GM12878 (cell line): ENCODE measurements at regions of chr1 and their contacts with region 1.

Region 1: GRCh38 chr1:54488779-54489626 is 59.0 kb upstream of the ACOT11 start:
- DNase-seq: no peak
- ATAC-seq: peak; percentile 91
- H3K4me3 ChIP-seq: peak overlapping the region; percentile 94
- H3K27ac ChIP-seq: peak overlapping the region; percentile 55
- H3K4me1 ChIP-seq: peaks cover 7% of the 10 kb centered on the region
- H3K27me3 ChIP-seq: peaks cover 0 to 2% of the 10 kb centered on the region in 2 experiments; a peak in 1 of 4 replicates
- CTCF ChIP-seq: peak; percentile 78 to 98 (median 91)
- EP300 ChIP-seq: no peak
- POLR2A ChIP-seq: no peak
- RAD21 ChIP-seq: peak; percentile 85

Region 2: GRCh38 chr1:54070171-54070837 is 418.7 kb before region 1 on chr1:
- CTCF ChIA-PET with region 1: interaction called, 7 read pairs
- POLR2A ChIA-PET with region 1: no interaction called
- RAD21 ChIA-PET with region 1: interaction called, 6 read pairs
- SMC1A ChIA-PET with region 1: no interaction called
- in situ Hi-C with region 1: loop called (anchors 5 kb)
- intact Hi-C with region 1: loop called (anchors 1 kb)
- DNase-seq: no peak
- ATAC-seq: peak; percentile 93
- H3K4me3 ChIP-seq: no peak overlapping the region
- H3K27ac ChIP-seq: no peak overlapping the region
- H3K4me1 ChIP-seq: no peaks in the 10 kb centered on the region
- H3K27me3 ChIP-seq: no peaks in the 10 kb centered on the region
- CTCF ChIP-seq: peak; percentile 59 to 97 (median 61); a peak in 4 of 6 replicates
- EP300 ChIP-seq: no peak
- POLR2A ChIP-seq: no peak
- RAD21 ChIP-seq: peak; percentile 76

Region 3: DNA sequence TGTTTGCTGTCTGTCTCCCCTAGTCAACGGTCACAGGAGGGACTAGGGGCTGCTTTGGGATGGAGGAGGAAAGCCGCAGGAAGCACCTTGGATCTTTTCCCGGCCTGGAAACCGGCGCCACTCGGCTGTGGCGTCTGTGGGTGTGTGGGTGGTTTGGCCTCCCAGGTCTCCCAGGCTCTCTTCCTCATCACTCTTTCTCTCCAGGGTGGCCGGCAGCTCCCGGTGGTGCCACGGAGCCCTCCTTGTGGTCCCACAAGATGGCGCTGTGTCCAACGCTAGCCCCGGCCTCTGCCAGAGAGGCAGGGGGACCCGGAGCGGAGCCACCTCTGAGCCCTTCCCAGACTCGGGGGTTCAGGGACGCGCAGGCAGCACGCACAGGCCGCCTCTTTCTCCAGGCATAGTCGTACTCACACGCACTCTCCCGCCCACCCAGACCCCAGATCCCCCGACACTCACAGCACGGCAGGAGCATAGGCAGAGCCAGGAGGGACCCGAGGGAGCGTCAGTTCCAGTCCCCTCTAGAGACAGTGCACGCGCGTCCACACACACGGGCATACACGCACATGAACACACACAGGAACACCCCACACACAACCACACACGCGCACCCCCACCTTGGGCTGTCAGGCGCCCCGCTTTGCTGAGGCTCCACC is 367.4 kb before region 1 on chr1:
- CTCF ChIA-PET with region 1: interaction called, 13 read pairs
- POLR2A ChIA-PET with region 1: interaction called, 3 read pairs
- RAD21 ChIA-PET with region 1: interaction called, 9 read pairs
- SMC1A ChIA-PET with region 1: interaction called, 5 read pairs
- in situ Hi-C with region 1: no loop called
- intact Hi-C with region 1: loop called (anchors 2 kb)
- DNase-seq: no peak
- ATAC-seq: peak; percentile 88
- H3K4me3 ChIP-seq: no peak overlapping the region
- H3K27ac ChIP-seq: no peak overlapping the region
- H3K4me1 ChIP-seq: no peaks in the 10 kb centered on the region
- H3K27me3 ChIP-seq: no peaks in the 10 kb centered on the region; a peak in 1 of 4 replicates
- CTCF ChIP-seq: peak; percentile 46 to 64 (median 63)
- EP300 ChIP-seq: no peak
- POLR2A ChIP-seq: no peak
- RAD21 ChIP-seq: peak; percentile 74

Region 4: GRCh38 chr1:54199765-54200518 is 289.1 kb before region 1 on chr1 and contains the starts of genes CYB5RL and MRPL37:
- CTCF ChIA-PET with region 1: interaction called, 16 read pairs
- POLR2A ChIA-PET with region 1: interaction called, 9 read pairs
- RAD21 ChIA-PET with region 1: interaction called, 9 read pairs
- SMC1A ChIA-PET with region 1: interaction called, 5 read pairs
- in situ Hi-C with region 1: no loop called
- intact Hi-C with region 1: loop called (anchors 5 kb)
- DNase-seq: peak; percentile 91
- ATAC-seq: peak; percentile 98
- H3K4me3 ChIP-seq: peak within 1 kb of the TSS; percentile 88
- H3K27ac ChIP-seq: peak within 1 kb of the TSS; percentile 68
- H3K4me1 ChIP-seq: 0 out of 2 replicates have a peak, but pooled peaks cover 5% of the 10 kb centered on the region
- H3K27me3 ChIP-seq: no peaks in the 10 kb centered on the region
- CTCF ChIP-seq: no peak
- EP300 ChIP-seq: no peak
- POLR2A ChIP-seq: peak; percentile 95
- RAD21 ChIP-seq: no peak
- polyA plus RNA-seq, gene CYB5RL: 3.1 to 5.0 TPM
- polyA plus RNA-seq, gene MRPL37: 41.4 to 109 TPM

Region 5: DNA sequence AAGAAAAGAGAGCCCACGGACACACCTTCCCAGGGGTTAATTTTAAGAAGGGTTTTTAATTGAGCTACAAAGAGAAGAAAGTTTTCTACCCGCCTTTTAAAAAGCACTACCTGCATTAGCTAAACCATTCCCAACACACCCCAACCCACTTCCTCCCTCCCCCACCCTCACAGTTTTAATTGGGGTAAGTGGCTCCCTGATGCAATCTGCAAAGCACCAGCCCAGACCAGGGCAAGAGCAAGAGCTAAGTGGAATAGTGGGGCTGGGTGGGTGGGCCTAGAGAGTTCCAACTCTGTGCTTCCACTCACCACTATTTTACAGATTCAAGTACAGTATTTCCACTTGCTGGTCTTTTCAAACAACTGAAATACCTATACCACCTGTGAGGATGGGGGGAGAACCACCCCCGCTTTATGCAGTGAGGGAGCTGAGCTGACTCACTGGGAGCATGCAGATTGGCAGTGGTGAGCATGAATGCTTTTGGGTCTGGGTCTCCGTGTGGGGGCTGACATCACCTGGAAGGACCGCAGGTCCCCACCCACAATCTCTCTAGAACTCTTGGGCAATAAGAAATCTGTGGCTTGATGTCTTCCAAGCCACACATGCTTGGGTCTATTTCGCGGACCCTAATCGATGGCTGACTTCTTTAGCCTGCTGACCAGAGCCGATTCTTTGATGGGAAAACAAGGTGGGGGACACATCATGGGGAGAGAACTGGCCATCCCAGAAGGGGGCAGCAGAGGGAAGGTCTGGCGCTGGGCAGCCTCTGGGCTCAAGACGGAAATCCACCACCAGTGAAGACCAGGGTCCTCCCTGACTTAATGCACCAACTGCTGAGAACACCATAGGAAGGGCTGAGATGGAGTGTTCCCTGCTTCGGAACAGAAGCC is 178.3 kb before region 1 on chr1:
- CTCF ChIA-PET with region 1: interaction called, 7 read pairs
- POLR2A ChIA-PET with region 1: interaction called, 3 read pairs
- RAD21 ChIA-PET with region 1: interaction called, 6 read pairs
- SMC1A ChIA-PET with region 1: interaction called, 4 read pairs
- in situ Hi-C with region 1: no loop called
- intact Hi-C with region 1: loop called (anchors 2 kb)
- DNase-seq: no peak
- ATAC-seq: peak; percentile 74
- H3K4me3 ChIP-seq: no peak overlapping the region
- H3K27ac ChIP-seq: no peak overlapping the region
- H3K4me1 ChIP-seq: no peaks in the 10 kb centered on the region
- H3K27me3 ChIP-seq: no peaks in the 10 kb centered on the region
- CTCF ChIP-seq: peak; percentile 34 to 49 (median 43); a peak in 4 of 6 replicates
- EP300 ChIP-seq: no peak
- POLR2A ChIP-seq: no peak
- RAD21 ChIP-seq: peak; percentile 50

Region 6: DNA sequence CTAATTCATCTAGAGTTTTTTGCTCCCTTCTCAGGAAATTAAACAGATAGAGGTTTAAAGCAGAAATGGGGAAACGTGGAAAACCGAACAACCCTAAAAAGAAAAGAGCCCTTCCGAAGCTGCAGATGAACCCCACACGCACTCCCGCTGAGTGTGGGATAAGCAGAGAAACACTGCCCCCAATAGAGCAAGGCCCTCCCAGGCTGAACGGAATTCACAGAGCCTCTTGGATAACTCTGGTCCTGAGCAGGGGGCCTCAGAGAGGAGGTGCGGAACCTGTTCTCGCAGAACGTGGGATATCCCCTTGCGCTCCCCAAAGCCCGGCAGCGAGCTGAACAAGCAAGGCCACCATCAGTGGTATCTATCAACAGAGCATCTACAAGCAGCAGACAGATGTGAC is 127.7 kb before region 1 on chr1:
- CTCF ChIA-PET with region 1: interaction called, 25 read pairs
- POLR2A ChIA-PET with region 1: no interaction called
- RAD21 ChIA-PET with region 1: interaction called, 7 read pairs
- SMC1A ChIA-PET with region 1: interaction called, 6 read pairs
- in situ Hi-C with region 1: no loop called
- intact Hi-C with region 1: loop called (anchors 2 kb)
- DNase-seq: no peak
- ATAC-seq: no peak
- H3K4me3 ChIP-seq: no peak overlapping the region
- H3K27ac ChIP-seq: no peak overlapping the region
- H3K4me1 ChIP-seq: peaks cover 32% of the 10 kb centered on the region
- H3K27me3 ChIP-seq: no peaks in the 10 kb centered on the region
- CTCF ChIP-seq: no peak
- EP300 ChIP-seq: no peak
- POLR2A ChIP-seq: no peak
- RAD21 ChIP-seq: no peak

Region 7: DNA sequence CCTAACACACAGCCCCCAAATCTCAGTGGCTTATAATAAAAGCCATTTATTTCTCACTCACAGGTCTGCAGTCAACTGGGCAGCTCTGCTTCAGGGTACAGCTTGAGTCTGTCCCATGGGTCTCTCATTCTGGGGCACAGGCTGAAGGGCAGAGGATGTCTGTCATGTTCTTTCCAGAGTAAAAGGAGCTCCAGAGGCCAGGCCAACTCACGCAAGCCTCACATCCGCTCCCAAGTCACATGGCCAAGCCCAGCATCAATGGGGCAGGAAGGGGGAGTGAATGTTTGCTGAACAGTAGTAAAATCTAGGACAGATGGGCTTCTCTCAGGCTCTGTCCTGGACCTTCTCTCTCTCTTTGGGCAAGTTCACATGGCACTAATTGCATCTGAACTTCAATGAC is 75.7 kb before region 1 on chr1:
- CTCF ChIA-PET with region 1: no interaction called
- POLR2A ChIA-PET with region 1: interaction called, 3 read pairs
- RAD21 ChIA-PET with region 1: interaction called, 3 read pairs
- SMC1A ChIA-PET with region 1: no interaction called
- in situ Hi-C with region 1: loop called (anchors 5 kb)
- intact Hi-C with region 1: no loop called
- DNase-seq: no peak
- ATAC-seq: no peak
- H3K4me3 ChIP-seq: no peak overlapping the region
- H3K27ac ChIP-seq: no peak overlapping the region
- H3K4me1 ChIP-seq: peaks cover 18% of the 10 kb centered on the region
- H3K27me3 ChIP-seq: no peaks in the 10 kb centered on the region; a peak in 1 of 4 replicates
- CTCF ChIP-seq: no peak
- EP300 ChIP-seq: no peak
- POLR2A ChIP-seq: no peak
- RAD21 ChIP-seq: no peak

Region 8: GRCh38 chr1:54738244-54738643 is 249.2 kb after region 1 on chr1:
- CTCF ChIA-PET with region 1: no interaction called
- POLR2A ChIA-PET with region 1: no interaction called
- RAD21 ChIA-PET with region 1: no interaction called
- SMC1A ChIA-PET with region 1: no interaction called
- in situ Hi-C with region 1: no loop called
- intact Hi-C with region 1: no loop called
- DNase-seq: no peak
- ATAC-seq: no peak
- H3K4me3 ChIP-seq: no peak overlapping the region
- H3K27ac ChIP-seq: no peak overlapping the region
- H3K4me1 ChIP-seq: no peaks in the 10 kb centered on the region
- H3K27me3 ChIP-seq: no peaks in the 10 kb centered on the region
- CTCF ChIP-seq: no peak
- EP300 ChIP-seq: no peak
- POLR2A ChIP-seq: no peak
- RAD21 ChIP-seq: no peak